Testis (tissue), 5 donors: ENCODE measurements at regions of chr17 and their contacts with region 1.

Region 1: DNA sequence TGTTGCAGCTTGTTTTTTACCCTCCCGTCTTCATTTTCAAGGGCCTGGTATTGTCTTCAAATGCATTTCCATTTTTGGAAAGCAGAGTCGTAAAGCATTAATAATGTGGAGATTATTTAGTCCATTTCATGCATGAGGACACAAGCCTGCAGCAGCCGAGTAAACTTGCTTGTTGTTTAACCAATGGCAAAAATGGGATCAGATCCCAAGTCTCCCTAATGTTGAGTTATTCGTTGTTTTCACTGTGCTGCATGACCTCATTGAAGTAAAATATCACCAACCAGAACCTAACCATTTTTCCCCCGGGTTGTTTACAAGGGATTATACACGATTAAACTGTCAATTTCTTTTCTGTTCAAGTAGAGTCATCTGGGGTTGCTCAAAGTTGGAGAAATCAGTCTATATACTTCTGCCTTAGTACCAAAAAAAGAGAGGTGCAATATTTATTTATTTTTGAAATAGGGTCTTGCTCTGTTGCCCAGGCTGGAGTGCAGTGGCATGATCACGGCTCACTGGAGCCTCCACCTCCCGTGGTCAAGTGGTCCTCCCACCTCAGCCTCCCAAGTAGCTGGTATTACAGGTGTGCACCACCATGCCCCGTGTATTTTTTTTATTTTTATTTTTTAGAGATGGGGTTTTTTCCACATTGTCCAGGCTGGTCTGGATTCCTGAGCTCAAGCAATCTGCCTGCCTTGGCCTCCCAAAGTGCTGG is 12.4 kb downstream of the AMZ2 start:
- DNase-seq: no peak
- H3K4me3 ChIP-seq: no peak overlapping the region
- H3K27ac ChIP-seq: no peak overlapping the region
- H3K4me1 ChIP-seq: peaks cover 3% of the 10 kb centered on the region
- H3K27me3 ChIP-seq: no peaks in the 10 kb centered on the region
- CTCF ChIP-seq: no peak
- POLR2A ChIP-seq: no peak

Region 2: DNA sequence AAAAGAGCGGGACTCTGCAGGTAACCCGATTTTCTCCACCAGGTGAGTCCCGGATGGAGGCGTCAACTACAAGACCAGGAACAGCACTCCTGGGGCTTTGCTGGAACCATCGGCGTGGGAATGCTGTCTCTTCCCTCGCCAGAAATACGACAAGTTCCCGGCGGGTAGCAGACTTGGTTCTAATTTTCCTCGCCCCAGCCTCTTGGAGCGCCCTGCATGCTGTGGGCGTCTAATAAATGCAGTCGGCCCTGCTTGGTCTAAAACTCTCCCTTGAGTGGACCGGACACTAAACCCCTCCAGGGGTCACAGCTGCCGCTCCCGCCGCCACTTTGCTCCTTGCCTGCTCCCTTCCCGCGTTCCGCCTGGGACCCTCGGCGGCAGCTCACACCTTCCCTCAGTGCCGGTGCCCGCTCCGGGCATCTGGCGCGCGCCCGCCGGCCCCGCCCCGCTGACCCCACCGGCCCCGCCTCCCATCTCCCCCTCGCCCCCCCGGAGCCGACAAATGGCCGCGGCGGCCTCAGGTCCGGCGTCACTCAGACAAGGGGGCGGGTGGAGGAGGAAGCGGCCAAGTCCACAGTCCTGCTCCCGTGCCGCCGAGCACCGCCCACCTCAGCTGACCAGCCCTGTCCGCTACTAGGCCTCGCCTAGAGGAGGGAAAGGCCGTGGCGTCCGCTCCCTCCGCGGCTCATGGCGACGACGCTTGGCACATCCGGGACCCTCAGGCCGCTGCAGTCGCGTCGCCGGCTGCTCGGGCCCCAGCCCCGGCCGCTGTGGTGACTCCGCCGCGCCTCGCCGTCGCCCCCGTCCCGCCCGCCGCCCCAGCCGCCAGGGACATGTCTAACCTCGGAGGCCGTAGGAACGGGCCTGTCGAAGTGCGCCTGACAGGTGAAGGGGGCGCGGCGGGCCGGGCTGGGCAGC is 158.9 kb before region 1 on chr17:
- intact Hi-C with region 1: no loop called
- DNase-seq: peak; percentile 97
- H3K4me3 ChIP-seq: peak overlapping the region; percentile 84 to 87
- H3K27ac ChIP-seq: peak overlapping the region; percentile 78 to 94
- H3K4me1 ChIP-seq: peaks cover 11% of the 10 kb centered on the region
- H3K27me3 ChIP-seq: no peaks in the 10 kb centered on the region
- CTCF ChIP-seq: no peak
- POLR2A ChIP-seq: peak; percentile 25

Region 3: DNA sequence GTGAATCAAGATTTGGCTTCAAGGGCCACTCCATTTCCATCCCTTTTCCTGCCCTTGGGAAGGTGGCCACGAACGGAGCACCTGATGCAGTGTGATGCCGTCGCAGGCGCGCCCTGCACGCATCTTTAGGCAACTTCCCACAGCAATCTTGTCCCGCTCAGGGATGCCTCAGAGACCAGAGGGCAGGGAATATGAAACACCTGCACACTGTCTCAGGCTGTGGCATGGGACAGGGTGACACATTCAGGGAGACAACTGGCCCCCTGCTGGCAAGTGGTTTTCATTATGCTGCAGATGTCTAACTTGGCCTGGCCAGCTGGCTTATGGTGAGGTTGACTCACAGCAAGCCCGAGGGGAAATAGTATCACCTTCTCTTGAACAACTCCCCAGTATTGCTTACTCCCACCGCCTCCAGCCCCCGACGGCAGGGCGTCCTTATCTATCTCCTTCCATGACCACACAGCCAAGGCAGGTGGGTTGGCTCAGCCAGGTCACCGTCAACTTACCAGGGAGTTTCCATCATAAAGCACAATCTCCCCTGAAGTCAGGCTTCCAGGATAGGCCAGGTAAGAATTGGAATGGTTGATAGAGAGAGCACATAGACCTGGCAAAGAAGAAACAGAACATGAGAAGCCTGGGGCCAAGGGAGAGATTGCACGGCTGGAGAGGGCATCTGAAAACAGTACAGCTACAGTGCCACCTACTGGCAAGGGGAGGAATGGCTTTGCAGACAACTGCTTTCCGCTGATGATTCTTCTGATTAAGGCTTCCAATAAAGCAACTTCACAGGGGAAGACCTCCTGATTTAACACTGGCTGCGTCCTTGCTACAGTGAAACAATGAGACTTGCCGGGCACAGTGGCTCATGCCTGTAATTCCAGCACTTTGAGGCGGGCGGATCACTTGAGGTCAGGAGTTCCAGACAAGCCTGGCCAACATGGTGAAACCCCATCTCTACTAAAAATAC is 176.0 kb after region 1 on chr17:
- intact Hi-C with region 1: loop called (anchors 10 kb)
- DNase-seq: peak; percentile 87
- H3K4me3 ChIP-seq: no peak overlapping the region
- H3K27ac ChIP-seq: no peak overlapping the region
- H3K4me1 ChIP-seq: peaks cover 13% of the 10 kb centered on the region
- H3K27me3 ChIP-seq: no peaks in the 10 kb centered on the region
- CTCF ChIP-seq: peak; percentile 73 to 91 (median 91)
- POLR2A ChIP-seq: no peak

Region 4: DNA sequence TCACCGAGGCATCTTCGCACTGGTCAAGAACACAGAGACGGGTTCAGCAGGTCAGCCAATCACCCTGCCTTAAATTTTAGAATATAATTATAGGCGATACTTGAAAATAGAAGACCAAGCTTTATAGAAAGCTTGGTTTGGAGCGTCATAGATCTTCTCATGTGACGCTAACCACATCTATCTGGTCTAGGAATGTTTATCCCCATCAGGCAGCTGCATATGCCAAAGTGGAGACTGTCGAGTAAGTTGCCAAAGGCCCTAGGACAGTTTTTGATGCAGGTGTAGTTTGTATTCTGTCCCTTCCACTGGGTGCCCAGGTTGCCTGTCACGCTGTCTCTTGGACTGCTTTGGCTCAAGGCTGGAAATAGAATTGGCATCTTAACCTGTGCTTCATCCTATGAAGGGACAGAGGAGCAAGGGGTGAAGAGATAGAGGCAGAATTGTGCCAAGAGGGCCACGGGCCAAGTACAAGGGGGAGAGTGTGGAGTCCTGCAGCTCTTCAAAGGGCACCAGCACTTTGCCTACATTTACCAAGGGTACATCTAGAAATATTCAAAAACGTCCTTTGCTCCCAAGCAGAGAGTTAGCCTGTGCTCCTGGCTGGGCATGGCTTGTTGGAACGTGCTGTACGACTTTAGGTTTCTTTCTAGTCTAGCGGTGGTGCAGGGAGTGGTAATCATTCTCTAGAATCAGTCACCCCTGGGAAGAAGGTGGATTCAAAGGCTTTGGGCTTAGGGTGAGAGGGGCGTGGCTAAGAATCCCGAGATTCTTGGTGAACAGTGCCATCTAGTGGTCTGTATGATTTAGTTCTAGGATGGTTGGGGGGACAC is 202.4 kb after region 1 on chr17:
- intact Hi-C with region 1: loop called (anchors 10 kb)
- DNase-seq: peak; percentile 77
- H3K4me3 ChIP-seq: no peak overlapping the region
- H3K27ac ChIP-seq: no peak overlapping the region
- H3K4me1 ChIP-seq: peaks cover 19% of the 10 kb centered on the region
- H3K27me3 ChIP-seq: no peaks in the 10 kb centered on the region
- CTCF ChIP-seq: peak; percentile 50 to 77 (median 70)
- POLR2A ChIP-seq: no peak